Panc1 (cell line): ENCODE measurements at regions of chr11 and their contacts with region 1.

Region 1: GRCh38 chr11:86938900-86939880 is 16.0 kb downstream of the FZD4 start:
- DNase-seq: peak; percentile 57
- ATAC-seq: peak; percentile 74
- H3K4me3 ChIP-seq: no peak overlapping the region
- H3K27ac ChIP-seq: no peak overlapping the region; the same call in 1 of the 2 replicates
- H3K4me1 ChIP-seq: peaks cover 10% of the 10 kb centered on the region
- H3K27me3 ChIP-seq: no peaks in the 10 kb centered on the region
- CTCF ChIP-seq: peak; percentile 66

Region 2: GRCh38 chr11:86955361-86956120 is 16.4 kb after region 1 on chr11 and contains the start of gene FZD4:
- CTCF ChIA-PET with region 1: interaction called, 4 read pairs
- POLR2A ChIA-PET with region 1: interaction called, 12 read pairs
- in situ Hi-C with region 1: no loop called
- intact Hi-C with region 1: no loop called
- DNase-seq: no peak
- ATAC-seq: peak; percentile 97
- H3K4me3 ChIP-seq: peak within 1 kb of the TSS; percentile 90 to 93
- H3K27ac ChIP-seq: peak within 1 kb of the TSS; percentile 87
- H3K4me1 ChIP-seq: peaks cover 12% of the 10 kb centered on the region; the same call in 1 of the 2 replicates
- H3K27me3 ChIP-seq: peaks cover 5% of the 10 kb centered on the region; the same call in 1 of the 2 replicates
- CTCF ChIP-seq: peak; percentile 43
- total RNA-seq, gene FZD4: 11.1 TPM

Region 3: GRCh38 chr11:86999859-87000753 is 60.9 kb after region 1 on chr11:
- CTCF ChIA-PET with region 1: no interaction called
- POLR2A ChIA-PET with region 1: no interaction called
- in situ Hi-C with region 1: no loop called
- intact Hi-C with region 1: no loop called
- DNase-seq: no peak
- ATAC-seq: peak; percentile 93
- H3K4me3 ChIP-seq: no peak overlapping the region
- H3K27ac ChIP-seq: peak overlapping the region; percentile 87
- H3K4me1 ChIP-seq: peaks cover 25% of the 10 kb centered on the region
- H3K27me3 ChIP-seq: no peaks in the 10 kb centered on the region
- CTCF ChIP-seq: no peak

Region 4: DNA sequence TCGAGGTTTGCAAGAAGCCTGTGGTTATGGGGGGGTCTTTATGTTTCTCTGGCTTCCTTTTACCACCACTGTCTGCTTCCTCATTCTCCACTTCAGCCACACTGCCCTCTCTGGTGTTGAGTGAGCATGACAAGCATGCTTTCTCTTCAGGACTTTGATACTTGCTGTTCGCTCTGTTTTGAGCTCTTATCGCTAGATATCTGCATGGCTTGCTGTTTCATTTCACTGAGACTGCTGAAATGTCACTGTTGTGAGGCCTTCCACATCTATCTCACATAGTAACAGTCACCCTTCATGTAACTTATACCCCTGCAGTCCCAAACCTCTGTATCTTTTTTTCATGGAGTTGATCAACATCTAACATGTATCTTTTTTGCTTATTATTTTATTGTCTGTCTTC is 158.4 kb after region 1 on chr11:
- CTCF ChIA-PET with region 1: interaction called, 18 read pairs
- POLR2A ChIA-PET with region 1: no interaction called
- in situ Hi-C with region 1: no loop called
- intact Hi-C with region 1: loop called (anchors 10 kb)
- DNase-seq: peak; percentile 41
- ATAC-seq: peak; percentile 93
- H3K4me3 ChIP-seq: no peak overlapping the region
- H3K27ac ChIP-seq: no peak overlapping the region
- H3K4me1 ChIP-seq: no peaks in the 10 kb centered on the region
- H3K27me3 ChIP-seq: no peaks in the 10 kb centered on the region
- CTCF ChIP-seq: peak; percentile 92

Region 5: DNA sequence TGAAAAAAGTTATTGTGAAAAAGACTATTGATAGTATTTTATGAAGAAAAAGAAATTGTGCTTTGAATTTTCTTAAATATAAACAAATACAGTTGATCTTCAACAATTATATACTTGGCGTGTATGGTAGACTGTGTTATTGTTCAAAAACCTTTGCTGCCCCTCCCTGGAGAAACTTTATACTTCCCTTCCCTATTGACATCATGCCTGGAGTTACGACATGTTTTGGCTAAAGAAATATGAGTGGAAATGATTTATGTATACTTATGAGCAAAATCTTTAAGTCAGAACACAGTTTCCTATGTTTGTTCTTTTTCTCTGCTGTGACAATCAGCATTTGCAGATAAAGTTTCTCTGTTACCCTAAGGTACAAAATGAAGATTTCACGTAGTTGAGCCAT is 342.3 kb after region 1 on chr11:
- CTCF ChIA-PET with region 1: interaction called, 10 read pairs
- POLR2A ChIA-PET with region 1: no interaction called
- in situ Hi-C with region 1: no loop called
- intact Hi-C with region 1: no loop called
- DNase-seq: no peak
- ATAC-seq: peak; percentile 68; the same call in 1 of the 2 replicates
- H3K4me3 ChIP-seq: no peak overlapping the region
- H3K27ac ChIP-seq: no peak overlapping the region
- H3K4me1 ChIP-seq: no peaks in the 10 kb centered on the region
- H3K27me3 ChIP-seq: no peaks in the 10 kb centered on the region
- CTCF ChIP-seq: peak; percentile 18; the same call in 1 of the 2 replicates

Region 6: GRCh38 chr11:87290304-87290922 is 351.2 kb after region 1 on chr11:
- CTCF ChIA-PET with region 1: interaction called, 7 read pairs
- POLR2A ChIA-PET with region 1: no interaction called
- in situ Hi-C with region 1: no loop called
- intact Hi-C with region 1: loop called (anchors 2 kb)
- DNase-seq: peak; percentile 33
- ATAC-seq: peak; percentile 63; the same call in 1 of the 2 replicates
- H3K4me3 ChIP-seq: no peak overlapping the region
- H3K27ac ChIP-seq: no peak overlapping the region
- H3K4me1 ChIP-seq: no peaks in the 10 kb centered on the region
- H3K27me3 ChIP-seq: no peaks in the 10 kb centered on the region
- CTCF ChIP-seq: peak; percentile 60; the same call in 1 of the 2 replicates

Region 7: GRCh38 chr11:87421422-87421821 is 482.2 kb after region 1 on chr11:
- CTCF ChIA-PET with region 1: interaction called, 3 read pairs
- POLR2A ChIA-PET with region 1: interaction called, 3 read pairs
- in situ Hi-C with region 1: no loop called
- intact Hi-C with region 1: loop called (anchors 10 kb)
- DNase-seq: peak; percentile 80
- ATAC-seq: peak; percentile 91
- H3K4me3 ChIP-seq: no peak overlapping the region
- H3K27ac ChIP-seq: no peak overlapping the region
- H3K4me1 ChIP-seq: no peaks in the 10 kb centered on the region
- H3K27me3 ChIP-seq: peaks cover 17% of the 10 kb centered on the region
- CTCF ChIP-seq: peak; percentile 88